Endothelial cell of umbilical vein (primary cell): ENCODE measurements at regions of chr10 and their contacts with region 1.

Region 1: DNA sequence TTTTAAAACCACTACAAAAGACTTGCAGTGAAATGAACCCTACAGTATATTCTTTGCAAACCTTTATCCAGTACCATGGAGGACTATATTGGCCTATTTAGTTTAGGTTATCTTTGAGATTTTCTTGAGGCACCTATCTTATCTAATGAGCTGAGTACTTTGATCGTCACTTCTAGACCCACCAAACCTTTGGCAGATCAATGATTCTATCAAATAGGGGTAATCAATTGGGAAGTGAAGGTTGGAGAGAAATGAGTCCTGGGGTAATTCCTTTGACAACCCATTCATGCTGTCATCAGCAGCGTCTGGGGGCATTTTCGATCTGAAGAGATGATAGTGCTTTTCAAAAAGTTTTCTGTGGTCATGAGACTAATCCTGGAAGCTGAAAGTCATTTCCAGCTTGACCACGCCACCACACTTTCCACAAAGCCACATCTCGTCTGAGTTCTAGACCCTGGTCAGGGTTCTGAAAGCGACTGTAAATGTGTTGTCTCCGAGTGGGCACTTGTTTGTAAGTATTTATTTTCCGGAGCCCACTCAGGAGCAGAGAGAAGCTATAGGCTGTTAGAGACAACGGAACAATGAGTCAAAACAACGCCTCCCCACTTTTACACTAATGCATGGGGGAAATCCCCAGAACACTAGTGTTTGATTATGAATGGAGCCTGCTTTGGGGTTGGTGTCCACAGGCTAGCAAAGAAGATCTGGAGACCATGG is 4.8 kb downstream of the EGR2 start:
- DNase-seq: no peak
- H3K4me3 ChIP-seq: no peak overlapping the region
- H3K27ac ChIP-seq: no peak overlapping the region
- H3K4me1 ChIP-seq: peaks cover 17% of the 10 kb centered on the region
- H3K27me3 ChIP-seq: peaks cover 21 to 24% of the 10 kb centered on the region in 2 experiments
- CTCF ChIP-seq: no peak
- POLR2A ChIP-seq: no peak

Region 2: GRCh38 chr10:63383141-63383540 is 571.8 kb after region 1 on chr10:
- CTCF ChIA-PET with region 1: no interaction called
- POLR2A ChIA-PET with region 1: no interaction called
- dilution Hi-C with region 1: no loop called
- intact Hi-C with region 1: loop called (anchors 5 kb)
- DNase-seq: no peak
- H3K4me3 ChIP-seq: no peak overlapping the region
- H3K27ac ChIP-seq: no peak overlapping the region
- H3K4me1 ChIP-seq: peaks cover 4% of the 10 kb centered on the region
- H3K27me3 ChIP-seq: no peaks in the 10 kb centered on the region
- CTCF ChIP-seq: no peak
- POLR2A ChIP-seq: no peak